ENCODE measurements at regions of chr1 and their contacts with region 1.

Region 1: GRCh38 chr1:228082135-228082891 is at the start of gene ARF1:
- DNase-seq: peak; percentile 95
- ATAC-seq: peak; percentile 86
- H3K4me3 Mint-ChIP-seq: peak within 1 kb of the TSS; percentile 92
- H3K27ac Mint-ChIP-seq: peak within 1 kb of the TSS; percentile 93
- H3K4me1 Mint-ChIP-seq: peaks cover 42% of the 10 kb centered on the region
- H3K27me3 Mint-ChIP-seq: no peaks in the 10 kb centered on the region
- total RNA-seq, gene ARF1: 325 to 337 TPM

Region 2: DNA sequence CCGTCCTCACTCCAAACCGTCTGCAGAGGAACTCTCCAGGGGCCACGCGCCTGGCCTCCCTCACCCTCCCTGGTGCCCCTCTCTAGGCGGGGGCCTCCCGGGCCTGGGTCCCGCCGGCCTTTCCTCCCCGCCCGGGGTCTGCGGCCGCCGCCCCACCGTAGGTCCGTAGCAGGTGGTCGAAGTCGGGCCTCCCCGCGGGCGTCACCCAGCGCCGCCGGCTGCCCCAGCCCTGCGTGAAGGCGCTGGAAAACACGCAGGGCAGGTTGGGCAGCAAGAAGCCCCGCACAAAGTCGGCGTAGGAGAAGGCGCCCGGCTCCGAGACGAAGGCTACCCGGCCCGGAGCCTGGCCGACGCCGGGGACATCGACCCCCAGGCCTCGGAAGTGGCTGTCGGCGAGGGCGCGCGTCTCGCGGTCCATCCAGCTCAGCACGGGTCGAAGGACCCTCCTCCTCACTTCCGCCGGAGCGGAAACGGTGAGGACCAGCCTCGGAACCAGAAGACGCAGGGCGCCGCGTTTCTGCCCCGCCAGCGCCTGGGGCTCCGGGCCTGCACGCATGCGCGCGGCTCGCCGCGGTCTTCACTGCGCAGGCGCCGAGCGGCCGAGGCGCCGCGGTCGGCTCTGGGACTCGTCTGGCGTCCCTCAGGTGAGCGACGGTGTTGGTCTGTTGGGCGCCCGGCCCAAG is 347.3 kb before region 1 on chr1 and contains the starts of genes JMJD4 and SNAP47:
- CTCF ChIA-PET with region 1: no interaction called
- POLR2A ChIA-PET with region 1: no interaction called
- intact Hi-C with region 1: loop called in 1 of 2 experiments (anchors 1 kb)
- DNase-seq: peak; percentile 95
- ATAC-seq: peak; percentile 94
- H3K4me3 Mint-ChIP-seq: peak within 1 kb of the TSS; percentile 89
- H3K27ac Mint-ChIP-seq: peak within 1 kb of the TSS; percentile 86
- H3K4me1 Mint-ChIP-seq: peaks cover 25% of the 10 kb centered on the region
- H3K27me3 Mint-ChIP-seq: no peaks in the 10 kb centered on the region
- total RNA-seq, gene JMJD4: 14.4 to 18.1 TPM
- total RNA-seq, gene SNAP47: 30.3 to 31.2 TPM

Region 3: DNA sequence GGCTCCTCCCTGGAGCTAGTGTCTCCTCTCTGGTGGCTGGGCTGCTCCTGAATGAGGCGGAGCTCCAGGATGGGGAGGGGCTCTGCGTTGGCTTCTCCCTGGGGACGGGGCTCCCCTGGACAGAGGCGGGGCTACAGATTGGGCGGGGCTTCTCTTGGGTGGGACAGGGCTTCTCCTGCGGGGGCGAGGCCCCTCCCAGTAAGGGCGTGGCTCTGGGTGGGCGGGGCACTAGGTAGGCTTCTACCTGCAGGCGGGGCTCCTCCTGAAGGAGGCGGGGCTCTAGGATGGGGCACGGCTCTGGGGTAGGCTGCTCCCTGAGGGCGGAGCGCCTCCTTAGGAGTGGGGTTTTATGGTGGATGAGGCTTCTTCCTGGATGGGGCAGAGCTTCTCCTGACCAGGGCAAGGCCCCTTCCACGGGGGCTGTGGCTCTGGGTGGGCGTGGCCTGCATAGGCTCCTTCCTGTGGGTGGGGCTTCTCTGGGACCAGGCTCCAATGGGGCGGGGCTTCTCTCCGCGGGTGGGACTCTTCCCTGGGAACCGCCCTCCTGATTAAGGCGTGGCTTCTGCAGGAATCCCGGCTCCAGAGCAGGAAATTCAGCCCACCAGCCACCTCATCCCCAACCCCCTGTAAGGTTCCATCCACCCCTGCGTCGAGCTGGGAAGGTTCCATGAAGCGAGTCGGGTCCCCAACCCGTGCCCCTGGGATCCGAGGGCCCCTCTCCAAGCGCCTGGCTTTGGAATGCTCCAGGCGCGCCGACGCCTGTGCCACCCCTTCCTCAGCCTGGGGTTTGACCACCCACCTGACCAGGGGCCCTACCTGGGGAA is 22.5 kb before region 1 on chr1:
- CTCF ChIA-PET with region 1: no interaction called
- POLR2A ChIA-PET with region 1: interaction called, 3 read pairs
- intact Hi-C with region 1: loop called in 1 of 2 experiments (anchors 1 kb)
- DNase-seq: peak; percentile 91
- ATAC-seq: peak; percentile 85
- H3K4me3 Mint-ChIP-seq: peak overlapping the region; percentile 51
- H3K27ac Mint-ChIP-seq: no peak overlapping the region
- H3K4me1 Mint-ChIP-seq: peaks cover 9% of the 10 kb centered on the region
- H3K27me3 Mint-ChIP-seq: peaks cover 30% of the 10 kb centered on the region

Region 4: GRCh38 chr1:228109073-228109961 is 27.0 kb after region 1 on chr1 and contains the start of gene MRPL55:
- CTCF ChIA-PET with region 1: interaction called, 4 read pairs
- POLR2A ChIA-PET with region 1: interaction called, 5 read pairs
- intact Hi-C with region 1: loop called (anchors 1 kb)
- DNase-seq: peak; percentile 99
- ATAC-seq: peak; percentile 92
- H3K4me3 Mint-ChIP-seq: peak within 1 kb of the TSS; percentile 90
- H3K27ac Mint-ChIP-seq: peak within 1 kb of the TSS; percentile 92
- H3K4me1 Mint-ChIP-seq: peaks cover 21% of the 10 kb centered on the region
- H3K27me3 Mint-ChIP-seq: no peaks in the 10 kb centered on the region
- total RNA-seq, gene MRPL55: 51.0 to 57.7 TPM

Region 5: GRCh38 chr1:228174482-228175375 is 92.4 kb after region 1 on chr1:
- CTCF ChIA-PET with region 1: no interaction called
- POLR2A ChIA-PET with region 1: no interaction called
- intact Hi-C with region 1: loop called in 1 of 2 experiments (anchors 2 kb)
- DNase-seq: peak; percentile 59
- ATAC-seq: peak; percentile 67
- H3K4me3 Mint-ChIP-seq: no peak overlapping the region
- H3K27ac Mint-ChIP-seq: no peak overlapping the region
- H3K4me1 Mint-ChIP-seq: no peaks in the 10 kb centered on the region
- H3K27me3 Mint-ChIP-seq: no peaks in the 10 kb centered on the region

Region 6: GRCh38 chr1:228457396-228458176 is 375.3 kb after region 1 on chr1:
- CTCF ChIA-PET with region 1: interaction called, 3 read pairs
- POLR2A ChIA-PET with region 1: interaction called, 4 read pairs
- intact Hi-C with region 1: loop called in 1 of 2 experiments (anchors 1 kb)
- DNase-seq: peak; percentile 92
- ATAC-seq: peak; percentile 89
- H3K4me3 Mint-ChIP-seq: peak overlapping the region; percentile 88
- H3K27ac Mint-ChIP-seq: peak overlapping the region; percentile 96
- H3K4me1 Mint-ChIP-seq: peaks cover 30% of the 10 kb centered on the region
- H3K27me3 Mint-ChIP-seq: no peaks in the 10 kb centered on the region

Measured in activated CD4-positive, alpha-beta T cell treated with anti-CD3 and anti-CD28 coated beads for 36 hours (primary cell).